AG04449 (cell line): ENCODE measurements at regions of chr22 and their contacts with region 1.

Region 1: GRCh38 chr22:30890686-30891442 is 77.7 kb downstream of the MORC2 start:
- DNase-seq: no peak
- H3K4me3 ChIP-seq: no peak overlapping the region
- CTCF ChIP-seq: peak; percentile 84

Region 2: GRCh38 chr22:30856741-30857502 is 33.9 kb before region 1 on chr22:
- CTCF ChIA-PET with region 1: interaction called, 12 read pairs
- POLR2A ChIA-PET with region 1: no interaction called
- DNase-seq: no peak
- H3K4me3 ChIP-seq: no peak overlapping the region
- CTCF ChIP-seq: no peak

Region 3: DNA sequence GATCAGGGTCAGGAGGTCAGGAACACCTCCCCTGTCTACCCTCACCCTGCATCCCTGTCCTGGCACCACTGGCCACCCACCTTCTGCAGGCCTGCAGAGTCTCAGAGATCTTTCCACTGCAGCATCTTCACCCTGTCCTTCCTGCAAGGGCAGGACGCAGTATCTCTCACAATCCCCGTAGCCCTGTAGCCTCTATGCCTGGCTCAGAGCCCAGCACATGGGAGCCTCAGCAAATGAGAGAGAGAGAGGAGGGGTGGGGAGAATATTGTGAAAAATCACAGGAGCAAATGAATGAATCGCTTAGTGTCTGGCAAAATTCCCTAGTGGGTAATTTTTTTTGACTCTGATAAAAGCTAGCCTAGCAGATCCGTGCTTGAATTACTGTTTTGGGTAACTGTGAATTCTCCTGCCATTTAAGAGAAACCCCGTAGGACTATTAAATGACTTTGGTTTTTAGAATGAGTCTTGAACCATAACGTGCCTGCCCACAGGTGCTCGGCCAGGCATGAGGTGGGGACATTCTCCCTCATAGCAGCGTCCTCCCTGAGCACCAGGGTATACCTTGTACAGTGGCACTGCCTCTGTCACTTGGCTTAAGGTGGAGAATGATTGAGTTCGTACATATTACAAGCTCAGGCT is 13.8 kb before region 1 on chr22:
- CTCF ChIA-PET with region 1: interaction called, 18 read pairs
- POLR2A ChIA-PET with region 1: no interaction called
- DNase-seq: no peak
- H3K4me3 ChIP-seq: no peak overlapping the region
- CTCF ChIP-seq: no peak

Region 4: GRCh38 chr22:30905696-30906341 is 15.0 kb after region 1 on chr22:
- CTCF ChIA-PET with region 1: interaction called, 36 read pairs
- POLR2A ChIA-PET with region 1: no interaction called
- DNase-seq: no peak
- H3K4me3 ChIP-seq: no peak overlapping the region
- CTCF ChIP-seq: no peak

Region 5: DNA sequence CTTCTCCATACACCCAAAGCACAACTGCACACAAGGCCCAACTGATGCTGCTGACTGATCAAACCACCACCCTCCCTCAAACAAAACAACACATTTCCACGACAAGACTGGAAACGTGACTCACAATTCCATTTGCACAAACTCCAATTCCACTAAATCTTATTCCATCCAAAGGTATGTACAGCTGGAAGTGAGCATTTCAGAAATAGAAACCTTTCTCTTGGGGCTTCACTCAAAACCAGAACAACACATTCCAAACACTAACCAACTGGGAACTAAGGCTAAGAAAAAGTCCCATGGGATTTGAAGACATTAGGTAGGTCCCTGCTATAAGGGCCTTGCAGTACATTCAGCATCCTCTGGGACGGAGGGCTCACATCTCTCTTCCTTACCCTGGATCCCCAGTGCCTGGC is 58.1 kb after region 1 on chr22:
- CTCF ChIA-PET with region 1: no interaction called
- POLR2A ChIA-PET with region 1: no interaction called
- DNase-seq: peak; percentile 28
- H3K4me3 ChIP-seq: no peak overlapping the region
- CTCF ChIP-seq: no peak